CD4-positive, alpha-beta T cell (primary cell): ENCODE measurements at regions of chr17 and their contacts with region 1.

Region 1: GRCh38 chr17:42312285-42313130 is 24.2 kb downstream of the STAT5A start:
- DNase-seq: peak; percentile 62 to 91 (median 73)
- ATAC-seq: peak; percentile 61
- H3K4me3 ChIP-seq: peak overlapping the region; percentile 40
- H3K4me3 Mint-ChIP-seq: peak overlapping the region; percentile 80
- H3K27ac ChIP-seq: peak overlapping the region; percentile 41 to 64
- H3K27ac Mint-ChIP-seq: peak overlapping the region; percentile 82
- H3K4me1 ChIP-seq: peaks cover 66% of the 10 kb centered on the region
- H3K4me1 Mint-ChIP-seq: peaks cover 82% of the 10 kb centered on the region
- H3K27me3 ChIP-seq: no peaks in the 10 kb centered on the region
- H3K27me3 Mint-ChIP-seq: no peaks in the 10 kb centered on the region
- CTCF ChIP-seq: peak; percentile 59

Region 2: DNA sequence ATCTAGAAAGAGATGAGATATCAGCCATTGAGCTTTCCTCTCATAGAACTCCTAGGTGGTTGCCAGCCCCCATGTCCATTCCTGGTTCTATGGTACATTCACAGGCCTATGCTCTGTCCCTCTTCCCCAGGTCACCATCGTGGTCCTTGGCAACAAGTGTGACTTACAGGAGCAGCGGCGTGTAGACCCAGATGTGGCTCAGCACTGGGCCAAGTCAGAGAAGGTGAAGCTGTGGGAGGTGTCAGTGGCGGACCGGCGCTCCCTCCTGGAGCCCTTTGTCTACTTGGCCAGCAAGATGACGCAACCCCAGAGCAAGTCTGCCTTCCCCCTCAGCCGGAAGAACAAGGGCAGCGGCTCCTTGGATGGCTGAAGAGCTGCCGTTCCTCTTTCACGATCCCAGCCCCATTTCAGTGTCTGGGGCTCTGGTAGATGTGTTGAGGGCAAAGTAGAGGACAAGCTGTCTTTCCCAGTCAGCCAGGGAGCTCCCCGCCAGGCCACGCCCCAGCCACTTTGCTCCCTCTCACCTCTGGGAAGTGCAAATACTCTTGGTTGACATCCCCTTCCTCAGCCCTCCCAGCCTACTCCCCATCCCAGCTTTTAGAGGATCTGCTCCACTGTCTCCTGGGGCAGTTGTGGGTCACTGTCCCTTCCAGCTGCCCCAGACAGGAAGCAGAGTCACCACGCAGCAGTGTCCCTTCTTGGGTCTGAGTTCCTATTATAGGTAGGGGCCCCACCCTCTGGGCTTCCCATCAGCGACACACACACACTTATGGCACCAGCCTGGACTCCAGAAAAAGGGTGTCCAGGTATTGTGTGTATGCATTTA is 288.8 kb before region 1 on chr17:
- CTCF ChIA-PET with region 1: no interaction called
- POLR2A ChIA-PET with region 1: no interaction called
- intact Hi-C with region 1: no loop called
- DNase-seq: peak in 2 of 14 experiments; percentile 51 to 59
- ATAC-seq: no peak
- H3K4me3 ChIP-seq: no peak overlapping the region
- H3K4me3 Mint-ChIP-seq: no peak overlapping the region
- H3K27ac ChIP-seq: no peak overlapping the region
- H3K27ac Mint-ChIP-seq: no peak overlapping the region
- H3K4me1 ChIP-seq: peaks cover 31% of the 10 kb centered on the region
- H3K4me1 Mint-ChIP-seq: peaks cover 32% of the 10 kb centered on the region
- H3K27me3 ChIP-seq: no peaks in the 10 kb centered on the region
- H3K27me3 Mint-ChIP-seq: no peaks in the 10 kb centered on the region
- CTCF ChIP-seq: no peak

Region 3: DNA sequence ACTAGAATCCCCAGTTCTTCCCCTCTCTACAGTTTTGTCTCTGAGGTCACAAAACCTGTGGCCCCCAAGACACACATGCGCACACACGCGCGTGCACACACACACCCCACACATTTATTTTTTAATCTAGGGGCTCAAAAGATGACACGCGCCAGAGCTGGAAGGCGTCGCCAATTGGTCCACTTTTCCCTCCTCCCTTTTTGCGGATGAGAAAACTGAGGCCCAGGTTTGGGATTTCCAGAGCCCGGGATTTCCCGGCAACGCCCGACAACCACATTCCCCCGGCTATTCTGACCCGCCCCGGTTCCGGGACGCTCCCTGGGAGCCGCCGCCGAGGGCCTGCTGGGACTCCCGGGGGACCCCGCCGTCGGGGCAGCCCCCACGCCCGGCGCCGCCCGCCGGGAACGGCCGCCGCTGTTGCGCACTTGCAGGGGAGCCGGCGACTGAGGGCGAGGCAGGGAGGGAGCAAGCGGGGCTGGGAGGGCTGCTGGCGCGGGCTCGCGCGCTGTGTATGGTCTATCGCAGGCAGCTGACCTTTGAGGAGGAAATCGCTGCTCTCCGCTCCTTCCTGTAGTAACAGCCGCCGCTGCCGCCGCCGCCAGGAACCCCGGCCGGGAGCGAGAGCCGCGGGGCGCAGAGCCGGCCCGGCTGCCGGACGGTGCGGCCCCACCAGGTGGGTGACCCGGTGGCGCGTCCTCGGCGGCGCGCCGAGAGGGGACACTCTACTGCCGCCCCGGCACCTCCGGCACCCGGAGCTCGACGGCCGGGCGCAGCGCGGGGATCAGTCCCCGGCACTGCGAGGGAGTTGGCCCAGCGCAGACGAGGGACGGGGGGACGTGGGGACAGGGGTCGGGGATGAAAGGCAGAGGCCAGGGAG is 24.3 kb before region 1 on chr17 and contains the start of gene STAT5A:
- CTCF ChIA-PET with region 1: interaction called, 5 read pairs
- POLR2A ChIA-PET with region 1: interaction called, 75 read pairs
- intact Hi-C with region 1: no loop called
- DNase-seq: peak; percentile 60 to 92 (median 76)
- ATAC-seq: peak; percentile 81
- H3K4me3 ChIP-seq: peak within 1 kb of the TSS; percentile 86
- H3K4me3 Mint-ChIP-seq: peak within 1 kb of the TSS; percentile 92
- H3K27ac ChIP-seq: peak within 1 kb of the TSS; percentile 87 to 89
- H3K27ac Mint-ChIP-seq: peak within 1 kb of the TSS; percentile 95
- H3K4me1 ChIP-seq: peaks cover 61% of the 10 kb centered on the region
- H3K4me1 Mint-ChIP-seq: peaks cover 51% of the 10 kb centered on the region
- H3K27me3 ChIP-seq: no peaks in the 10 kb centered on the region
- H3K27me3 Mint-ChIP-seq: no peaks in the 10 kb centered on the region
- CTCF ChIP-seq: no peak
- total RNA-seq, gene STAT5A: 141 to 150 TPM

Region 4: DNA sequence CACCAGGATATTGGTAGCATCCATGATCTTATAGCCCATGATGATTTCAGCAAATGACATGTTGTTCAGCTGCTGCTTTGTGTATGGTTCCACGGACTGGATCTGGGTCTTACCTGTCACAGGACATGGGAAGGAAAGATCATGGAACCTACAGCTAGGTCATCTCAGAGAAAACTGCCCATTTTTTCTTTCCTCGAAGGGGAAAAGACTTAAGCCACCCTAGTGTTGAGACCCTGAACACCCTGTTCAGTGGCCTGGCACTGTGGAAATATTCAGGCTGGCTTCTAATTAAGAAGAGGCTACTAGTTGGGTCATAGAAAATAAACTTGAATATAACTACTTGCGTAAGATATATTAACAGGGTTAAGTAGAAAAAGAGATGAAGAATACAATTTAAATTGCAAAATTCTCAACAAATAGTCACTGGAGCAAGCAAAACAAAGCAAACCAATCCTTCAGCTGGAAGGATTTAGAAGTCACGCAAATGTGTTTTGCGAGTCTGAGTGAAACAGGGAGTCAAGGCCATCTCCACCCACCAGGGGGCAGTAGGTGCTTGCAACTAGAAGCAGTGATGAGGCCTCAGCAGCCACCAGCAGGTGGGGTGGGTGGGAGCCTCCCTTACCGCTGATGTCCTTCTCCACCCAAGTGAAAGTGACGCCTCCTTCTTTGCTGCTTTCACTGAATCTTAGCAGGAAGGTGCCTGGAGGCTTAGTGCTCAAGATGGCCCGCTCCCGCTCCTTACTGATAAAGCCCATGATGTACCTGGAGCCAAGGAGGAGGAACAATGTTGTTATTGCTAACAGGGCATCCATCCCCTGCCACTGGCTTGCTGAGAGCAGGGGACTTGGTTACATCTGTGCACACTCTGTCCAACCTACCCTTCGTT is 10.1 kb after region 1 on chr17:
- CTCF ChIA-PET with region 1: interaction called, 53 read pairs
- POLR2A ChIA-PET with region 1: interaction called, 6 read pairs
- intact Hi-C with region 1: no loop called
- DNase-seq: peak; percentile 89 to 98 (median 95)
- ATAC-seq: peak; percentile 97
- H3K4me3 ChIP-seq: no peak overlapping the region
- H3K4me3 Mint-ChIP-seq: no peak overlapping the region
- H3K27ac ChIP-seq: peak overlapping the region in 1 of 2 donors; percentile 18
- H3K27ac Mint-ChIP-seq: peak overlapping the region; percentile 76
- H3K4me1 ChIP-seq: peaks cover 26% of the 10 kb centered on the region
- H3K4me1 Mint-ChIP-seq: peaks cover 37% of the 10 kb centered on the region
- H3K27me3 ChIP-seq: no peaks in the 10 kb centered on the region
- H3K27me3 Mint-ChIP-seq: no peaks in the 10 kb centered on the region
- CTCF ChIP-seq: peak; percentile 100

Region 5: DNA sequence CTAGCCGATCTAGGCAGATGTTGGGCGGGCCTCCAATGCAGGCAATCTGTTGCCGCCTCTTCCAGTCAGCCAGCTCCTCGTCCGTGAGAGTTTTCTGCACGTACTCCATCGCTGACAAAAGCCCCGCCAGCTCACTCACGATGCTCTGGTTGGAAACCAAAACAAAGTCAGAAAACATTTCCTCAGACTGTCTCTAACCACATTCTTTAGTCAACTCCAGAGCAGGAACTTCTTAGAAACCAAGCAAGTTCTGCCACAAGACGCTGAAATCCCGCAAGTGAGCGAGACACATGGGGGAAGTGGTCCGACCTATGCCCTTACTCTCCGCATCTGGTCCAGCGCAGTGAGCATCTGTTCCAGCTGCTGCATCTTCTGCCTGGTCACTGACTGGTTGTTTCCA is 24.9 kb after region 1 on chr17:
- CTCF ChIA-PET with region 1: no interaction called
- POLR2A ChIA-PET with region 1: interaction called, 4 read pairs
- intact Hi-C with region 1: loop called in 1 of 2 experiments (anchors 2 kb)
- DNase-seq: peak; percentile 55 to 91 (median 66)
- ATAC-seq: peak; percentile 84
- H3K4me3 ChIP-seq: no peak overlapping the region
- H3K4me3 Mint-ChIP-seq: peak overlapping the region; percentile 56
- H3K27ac ChIP-seq: peak overlapping the region; percentile 42 to 56
- H3K27ac Mint-ChIP-seq: peak overlapping the region; percentile 89
- H3K4me1 ChIP-seq: peaks cover 57% of the 10 kb centered on the region
- H3K4me1 Mint-ChIP-seq: peaks cover 51% of the 10 kb centered on the region
- H3K27me3 ChIP-seq: no peaks in the 10 kb centered on the region
- H3K27me3 Mint-ChIP-seq: no peaks in the 10 kb centered on the region
- CTCF ChIP-seq: no peak

Region 6: GRCh38 chr17:42405963-42406495 is 93.5 kb after region 1 on chr17:
- CTCF ChIA-PET with region 1: interaction called, 187 read pairs
- POLR2A ChIA-PET with region 1: interaction called, 40 read pairs
- intact Hi-C with region 1: no loop called
- DNase-seq: peak; percentile 70 to 90 (median 82)
- ATAC-seq: peak; percentile 88
- H3K4me3 ChIP-seq: no peak overlapping the region
- H3K4me3 Mint-ChIP-seq: no peak overlapping the region
- H3K27ac ChIP-seq: no peak overlapping the region
- H3K27ac Mint-ChIP-seq: no peak overlapping the region
- H3K4me1 ChIP-seq: peaks cover 13% of the 10 kb centered on the region
- H3K4me1 Mint-ChIP-seq: peaks cover 11% of the 10 kb centered on the region
- H3K27me3 ChIP-seq: no peaks in the 10 kb centered on the region
- H3K27me3 Mint-ChIP-seq: no peaks in the 10 kb centered on the region
- CTCF ChIP-seq: peak; percentile 76

Region 7: GRCh38 chr17:42579793-42580551 is 267.5 kb after region 1 on chr17:
- CTCF ChIA-PET with region 1: no interaction called
- POLR2A ChIA-PET with region 1: no interaction called
- intact Hi-C with region 1: no loop called
- DNase-seq: no peak
- ATAC-seq: no peak
- H3K4me3 ChIP-seq: no peak overlapping the region
- H3K4me3 Mint-ChIP-seq: peak overlapping the region; percentile 74
- H3K27ac ChIP-seq: no peak overlapping the region
- H3K27ac Mint-ChIP-seq: peak overlapping the region; percentile 24
- H3K4me1 ChIP-seq: peaks cover 18% of the 10 kb centered on the region
- H3K4me1 Mint-ChIP-seq: peaks cover 25% of the 10 kb centered on the region
- H3K27me3 ChIP-seq: no peaks in the 10 kb centered on the region
- H3K27me3 Mint-ChIP-seq: no peaks in the 10 kb centered on the region
- CTCF ChIP-seq: no peak